ENCODE measurements at regions of chr9 and their contacts with region 1.

Region 1: GRCh38 chr9:14730461-14730898 is 7.9 kb upstream of the CER1 start:
- DNase-seq: no peak
- ATAC-seq: no peak
- H3K4me3 Mint-ChIP-seq: no peak overlapping the region
- H3K27ac Mint-ChIP-seq: no peak overlapping the region
- H3K4me1 Mint-ChIP-seq: no peaks in the 10 kb centered on the region
- H3K27me3 Mint-ChIP-seq: peaks cover 7% of the 10 kb centered on the region

Region 2: GRCh38 chr9:14674630-14675029 is 55.9 kb before region 1 on chr9:
- CTCF ChIA-PET with region 1: no interaction called
- POLR2A ChIA-PET with region 1: no interaction called
- intact Hi-C with region 1: no loop called
- DNase-seq: no peak
- ATAC-seq: no peak
- H3K4me3 Mint-ChIP-seq: no peak overlapping the region
- H3K27ac Mint-ChIP-seq: no peak overlapping the region
- H3K4me1 Mint-ChIP-seq: peaks cover 13% of the 10 kb centered on the region
- H3K27me3 Mint-ChIP-seq: no peaks in the 10 kb centered on the region

Region 3: DNA sequence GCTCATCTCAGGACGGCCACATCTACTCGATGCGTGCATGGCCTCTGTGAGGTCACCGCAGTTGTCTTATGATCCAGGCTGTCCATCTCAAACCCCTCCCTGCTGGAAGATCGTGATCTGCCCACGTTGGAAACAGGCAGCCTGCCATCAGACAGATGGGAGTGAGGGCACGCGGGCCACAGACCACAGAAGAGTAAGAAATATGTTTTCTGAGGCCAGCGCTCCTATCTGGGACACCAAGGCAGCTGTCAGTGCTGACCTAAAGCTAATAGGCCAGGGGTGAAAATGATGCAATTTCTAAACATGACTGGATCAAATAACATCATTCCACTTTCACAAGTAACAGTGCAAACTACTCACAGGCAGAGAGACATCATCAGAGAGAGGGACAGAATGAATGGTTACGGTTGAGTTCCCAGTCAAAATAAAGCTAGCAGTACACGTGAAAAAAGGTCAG is 49.1 kb after region 1 on chr9:
- CTCF ChIA-PET with region 1: no interaction called
- POLR2A ChIA-PET with region 1: no interaction called
- intact Hi-C with region 1: loop called in 1 of 2 experiments (anchors 5 kb)
- DNase-seq: no peak
- ATAC-seq: no peak
- H3K4me3 Mint-ChIP-seq: no peak overlapping the region
- H3K27ac Mint-ChIP-seq: no peak overlapping the region
- H3K4me1 Mint-ChIP-seq: no peaks in the 10 kb centered on the region
- H3K27me3 Mint-ChIP-seq: peaks cover 10% of the 10 kb centered on the region

Measured in activated CD4-positive, alpha-beta T cell treated with anti-CD3 and anti-CD28 coated beads for 36 hours (primary cell).